Adrenal gland (tissue), 19 donors: ENCODE measurements at regions of chr3 and their contacts with region 1.

Region 1: DNA sequence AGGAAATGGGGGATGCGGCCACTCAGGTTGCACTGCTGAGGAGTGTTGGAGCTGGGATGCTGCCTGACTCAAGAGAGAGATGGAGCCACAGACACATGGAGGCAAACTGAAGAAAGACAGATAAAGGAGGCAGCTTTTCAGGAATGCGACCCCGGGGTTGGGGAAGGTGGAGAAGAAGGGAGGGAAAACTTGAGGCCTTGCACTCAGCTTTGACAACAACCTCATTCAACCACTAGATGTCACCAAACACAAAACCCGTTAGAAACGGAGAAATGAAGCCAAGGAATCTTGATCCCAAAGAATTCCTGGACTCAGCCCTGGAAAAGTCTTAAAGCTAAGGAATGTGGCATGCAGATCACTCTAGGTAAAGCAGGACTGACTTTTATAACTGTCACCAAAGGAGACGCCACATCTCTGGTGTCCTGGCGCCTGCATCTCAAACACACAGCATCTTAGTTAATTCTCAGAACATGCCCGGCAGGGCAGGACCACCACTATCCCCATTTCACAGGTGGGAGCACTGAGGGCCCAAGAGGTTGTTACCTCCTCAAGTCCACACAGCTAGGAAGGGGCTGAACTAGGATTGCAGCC is 59.6 kb upstream of the LMCD1 start:
- DNase-seq: peak in 5 of 7 donors; percentile 16 to 57 (median 27)
- H3K4me3 ChIP-seq: no peak overlapping the region
- H3K27ac ChIP-seq: no peak overlapping the region
- H3K4me1 ChIP-seq: peaks cover 16 to 29% of the 10 kb centered on the region in 2 donors
- H3K27me3 ChIP-seq: no peaks in the 10 kb centered on the region
- CTCF ChIP-seq: peak; percentile 54 to 84 (median 78)
- POLR2A ChIP-seq: no peak

Region 2: DNA sequence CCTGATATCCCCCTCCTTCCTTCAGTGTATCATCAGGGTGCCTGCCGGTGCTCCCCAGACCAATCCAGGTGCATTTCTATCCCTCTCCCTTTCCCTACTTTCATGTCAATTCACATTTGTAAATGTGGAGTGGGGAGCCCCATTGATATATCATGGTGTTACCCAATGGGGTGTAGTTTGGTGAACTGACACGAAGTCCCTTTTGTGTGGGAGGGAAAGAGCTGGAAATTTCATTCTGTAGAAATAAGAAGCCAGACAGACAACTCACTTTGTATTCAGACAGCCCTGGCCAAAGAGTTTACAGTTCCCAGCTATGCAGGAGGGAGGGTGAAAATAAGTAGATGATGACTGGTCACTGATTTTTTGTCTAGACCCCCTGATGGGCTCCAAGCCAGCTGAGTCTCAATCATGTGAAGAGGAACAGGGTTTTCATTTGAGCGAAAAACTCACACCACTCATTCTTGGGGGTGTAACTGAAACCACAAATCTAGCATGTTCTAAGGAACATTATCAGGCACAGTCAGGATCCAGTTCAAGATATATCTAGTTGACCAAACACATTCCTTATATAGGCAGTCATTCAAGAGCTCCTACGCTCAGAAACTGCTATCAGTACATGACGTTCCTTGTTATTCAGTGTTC is 118.4 kb after region 1 on chr3:
- intact Hi-C with region 1: no loop called
- DNase-seq: no peak
- H3K4me3 ChIP-seq: no peak overlapping the region
- H3K27ac ChIP-seq: peak overlapping the region in 2 of 5 donors; percentile 7 to 46
- H3K4me1 ChIP-seq: peaks cover 0 to 25% of the 10 kb centered on the region in 2 donors
- H3K27me3 ChIP-seq: no peaks in the 10 kb centered on the region
- CTCF ChIP-seq: no peak
- POLR2A ChIP-seq: no peak

Region 3: GRCh38 chr3:8607234-8608040 is 165.4 kb after region 1 on chr3:
- intact Hi-C with region 1: loop called (anchors 5 kb)
- DNase-seq: peak; percentile 56 to 89 (median 72)
- H3K4me3 ChIP-seq: no peak overlapping the region
- H3K27ac ChIP-seq: no peak overlapping the region
- H3K4me1 ChIP-seq: peaks cover 0 to 5% of the 10 kb centered on the region in 2 donors
- H3K27me3 ChIP-seq: no peaks in the 10 kb centered on the region
- CTCF ChIP-seq: peak; percentile 44 to 85 (median 72)
- POLR2A ChIP-seq: no peak

Region 4: GRCh38 chr3:8622873-8623691 is 181.0 kb after region 1 on chr3:
- intact Hi-C with region 1: loop called in 1 of 2 experiments (anchors 5 kb)
- DNase-seq: peak; percentile 37 to 85 (median 70)
- H3K4me3 ChIP-seq: no peak overlapping the region
- H3K27ac ChIP-seq: no peak overlapping the region
- H3K4me1 ChIP-seq: no peaks in the 10 kb centered on the region
- H3K27me3 ChIP-seq: no peaks in the 10 kb centered on the region
- CTCF ChIP-seq: peak; percentile 81 to 92 (median 86)
- POLR2A ChIP-seq: no peak